Calu3 (cell line): ENCODE measurements at regions of chr1 and their contacts with region 1.

Region 1: GRCh38 chr1:80594013-80594730 is 1206.6 kb upstream of the ADGRL2 start:
- DNase-seq: peak; percentile 69
- H3K4me3 Mint-ChIP-seq: peak overlapping the region; percentile 48
- H3K27ac Mint-ChIP-seq: peak overlapping the region; percentile 92
- H3K4me1 Mint-ChIP-seq: peaks cover 33% of the 10 kb centered on the region
- H3K27me3 Mint-ChIP-seq: no peaks in the 10 kb centered on the region
- CTCF ChIP-seq: no peak

Region 2: DNA sequence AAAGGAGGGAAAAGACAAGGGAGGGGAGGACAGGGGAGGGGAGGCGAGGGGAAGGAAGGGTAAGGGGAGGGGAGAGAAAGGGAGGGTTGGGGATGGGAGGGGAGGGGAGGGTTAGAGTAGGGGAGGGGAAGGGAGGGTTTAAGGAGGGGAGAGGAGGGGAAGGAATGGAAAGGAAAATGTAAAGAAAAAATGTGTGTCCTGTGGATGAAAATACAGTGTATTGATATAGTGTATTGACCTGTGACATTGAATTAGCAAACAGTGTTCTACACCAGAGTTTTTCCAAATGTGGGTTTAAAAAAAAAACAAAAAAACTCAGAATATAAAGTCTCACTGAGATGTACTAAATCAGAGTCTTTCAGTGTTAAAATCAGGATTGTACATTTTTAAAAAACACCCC is 73.2 kb before region 1 on chr1:
- CTCF ChIA-PET with region 1: no interaction called
- intact Hi-C with region 1: no loop called
- DNase-seq: no peak
- H3K4me3 Mint-ChIP-seq: no peak overlapping the region
- H3K27ac Mint-ChIP-seq: no peak overlapping the region
- H3K4me1 Mint-ChIP-seq: no peaks in the 10 kb centered on the region
- H3K27me3 Mint-ChIP-seq: no peaks in the 10 kb centered on the region
- CTCF ChIP-seq: no peak

Region 3: GRCh38 chr1:80565416-80565815 is 28.8 kb before region 1 on chr1:
- CTCF ChIA-PET with region 1: interaction called, 10 read pairs
- intact Hi-C with region 1: no loop called
- DNase-seq: no peak
- H3K4me3 Mint-ChIP-seq: no peak overlapping the region
- H3K27ac Mint-ChIP-seq: no peak overlapping the region
- H3K4me1 Mint-ChIP-seq: no peaks in the 10 kb centered on the region
- H3K27me3 Mint-ChIP-seq: no peaks in the 10 kb centered on the region
- CTCF ChIP-seq: no peak